ENCODE measurements at regions of chr10 and their contacts with region 1.

Region 1: GRCh38 chr10:80498833-80499741 is 38.6 kb upstream of the SH2D4B start:
- DNase-seq: peak; percentile 89
- ATAC-seq: peak; percentile 78
- H3K4me3 Mint-ChIP-seq: peak overlapping the region; percentile 56
- H3K27ac Mint-ChIP-seq: peak overlapping the region; percentile 90
- H3K4me1 Mint-ChIP-seq: peaks cover 96% of the 10 kb centered on the region
- H3K27me3 Mint-ChIP-seq: no peaks in the 10 kb centered on the region
- CTCF ChIP-seq: no peak

Region 2: GRCh38 chr10:80144067-80144695 is 354.9 kb before region 1 on chr10:
- CTCF ChIA-PET with region 1: no interaction called
- POLR2A ChIA-PET with region 1: no interaction called
- intact Hi-C with region 1: no loop called
- DNase-seq: peak; percentile 39
- ATAC-seq: peak; percentile 64
- H3K4me3 Mint-ChIP-seq: peak overlapping the region; percentile 63
- H3K27ac Mint-ChIP-seq: no peak overlapping the region
- H3K4me1 Mint-ChIP-seq: peaks cover 18% of the 10 kb centered on the region
- H3K27me3 Mint-ChIP-seq: no peaks in the 10 kb centered on the region
- CTCF ChIP-seq: peak; percentile 61

Region 3: GRCh38 chr10:80453701-80454513 is 45.2 kb before region 1 on chr10 and contains the start of gene TSPAN14:
- CTCF ChIA-PET with region 1: interaction called, 1,114 read pairs
- POLR2A ChIA-PET with region 1: interaction called, 9 read pairs
- intact Hi-C with region 1: loop called (anchors 2 kb)
- DNase-seq: peak; percentile 77
- ATAC-seq: peak; percentile 76
- H3K4me3 Mint-ChIP-seq: peak within 1 kb of the TSS; percentile 86
- H3K27ac Mint-ChIP-seq: peak within 1 kb of the TSS; percentile 95
- H3K4me1 Mint-ChIP-seq: peaks cover 39% of the 10 kb centered on the region
- H3K27me3 Mint-ChIP-seq: no peaks in the 10 kb centered on the region
- CTCF ChIP-seq: no peak
- total RNA-seq, gene TSPAN14: 43.9 to 45.5 TPM

Region 4: DNA sequence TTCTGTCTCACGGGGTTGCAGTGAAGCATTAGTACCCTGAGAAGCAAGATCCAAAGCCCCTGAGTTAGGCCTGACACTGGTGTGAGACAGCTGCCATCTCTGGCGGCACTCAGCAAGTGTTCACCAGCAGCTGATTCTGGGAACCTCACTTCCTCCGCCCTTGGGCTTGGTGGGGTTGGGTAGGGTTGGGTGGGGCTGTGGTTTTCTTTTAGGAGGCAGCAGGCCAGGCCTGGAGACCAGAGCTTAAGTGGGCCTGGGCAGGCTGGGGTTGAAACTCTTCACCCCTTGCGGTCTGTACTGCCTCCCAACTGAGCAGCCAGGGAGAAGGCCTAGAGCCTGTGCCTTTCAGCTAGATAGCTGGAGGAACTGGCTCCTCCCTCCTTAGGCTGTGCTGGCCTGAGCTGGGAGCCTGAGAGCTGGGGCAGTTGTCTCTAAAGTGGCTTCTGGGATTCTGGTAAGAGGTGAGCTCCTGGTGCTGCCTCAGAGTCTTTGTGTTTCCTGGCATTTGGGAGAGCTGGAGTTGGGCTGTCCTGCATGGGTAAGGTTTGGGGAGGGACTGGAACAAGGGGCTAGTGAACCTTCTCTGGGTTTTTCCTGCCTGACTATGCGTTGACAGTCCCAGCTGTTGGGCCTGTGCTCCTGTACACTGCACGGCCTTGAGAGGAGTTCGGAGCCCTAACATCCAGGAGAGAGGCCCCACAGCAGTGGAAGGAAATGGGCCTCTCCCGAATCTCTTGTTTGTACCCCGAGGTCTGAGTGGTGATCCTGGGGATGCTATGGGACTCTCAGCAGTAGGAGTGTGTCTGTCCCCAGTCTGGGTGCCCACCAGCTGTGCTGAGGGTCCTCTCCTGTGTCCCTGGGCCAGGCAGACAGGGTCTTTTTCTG is 39.8 kb before region 1 on chr10:
- CTCF ChIA-PET with region 1: interaction called, 1,114 read pairs
- POLR2A ChIA-PET with region 1: interaction called, 223 read pairs
- intact Hi-C with region 1: no loop called
- DNase-seq: peak; percentile 90
- ATAC-seq: peak; percentile 60
- H3K4me3 Mint-ChIP-seq: peak overlapping the region; percentile 86
- H3K27ac Mint-ChIP-seq: peak overlapping the region; percentile 95
- H3K4me1 Mint-ChIP-seq: peaks cover 78% of the 10 kb centered on the region
- H3K27me3 Mint-ChIP-seq: no peaks in the 10 kb centered on the region
- CTCF ChIP-seq: no peak

Region 5: GRCh38 chr10:80464557-80465450 is 34.3 kb before region 1 on chr10:
- CTCF ChIA-PET with region 1: interaction called, 1,114 read pairs
- POLR2A ChIA-PET with region 1: interaction called, 223 read pairs
- intact Hi-C with region 1: no loop called
- DNase-seq: peak; percentile 60
- ATAC-seq: no peak
- H3K4me3 Mint-ChIP-seq: peak overlapping the region; percentile 71
- H3K27ac Mint-ChIP-seq: peak overlapping the region; percentile 97
- H3K4me1 Mint-ChIP-seq: peaks cover 94% of the 10 kb centered on the region
- H3K27me3 Mint-ChIP-seq: no peaks in the 10 kb centered on the region
- CTCF ChIP-seq: no peak

Region 6: GRCh38 chr10:80472234-80473095 is 26.6 kb before region 1 on chr10:
- CTCF ChIA-PET with region 1: interaction called, 1,114 read pairs
- POLR2A ChIA-PET with region 1: interaction called, 223 read pairs
- intact Hi-C with region 1: no loop called
- DNase-seq: peak; percentile 72
- ATAC-seq: peak; percentile 70
- H3K4me3 Mint-ChIP-seq: peak overlapping the region; percentile 39
- H3K27ac Mint-ChIP-seq: peak overlapping the region; percentile 88
- H3K4me1 Mint-ChIP-seq: peaks cover 85% of the 10 kb centered on the region
- H3K27me3 Mint-ChIP-seq: no peaks in the 10 kb centered on the region
- CTCF ChIP-seq: no peak

Region 7: GRCh38 chr10:80487791-80488538 is 11.1 kb before region 1 on chr10:
- CTCF ChIA-PET with region 1: interaction called, 154 read pairs
- POLR2A ChIA-PET with region 1: interaction called, 113 read pairs
- intact Hi-C with region 1: no loop called
- DNase-seq: peak; percentile 79
- ATAC-seq: peak; percentile 50
- H3K4me3 Mint-ChIP-seq: peak overlapping the region; percentile 40
- H3K27ac Mint-ChIP-seq: peak overlapping the region; percentile 91
- H3K4me1 Mint-ChIP-seq: peaks cover 93% of the 10 kb centered on the region
- H3K27me3 Mint-ChIP-seq: no peaks in the 10 kb centered on the region
- CTCF ChIP-seq: no peak

Region 8: GRCh38 chr10:80509403-80510161 is 10.5 kb after region 1 on chr10:
- CTCF ChIA-PET with region 1: interaction called, 154 read pairs
- POLR2A ChIA-PET with region 1: interaction called, 10 read pairs
- intact Hi-C with region 1: no loop called
- DNase-seq: no peak
- ATAC-seq: no peak
- H3K4me3 Mint-ChIP-seq: no peak overlapping the region
- H3K27ac Mint-ChIP-seq: peak overlapping the region; percentile 53
- H3K4me1 Mint-ChIP-seq: peaks cover 30% of the 10 kb centered on the region
- H3K27me3 Mint-ChIP-seq: no peaks in the 10 kb centered on the region
- CTCF ChIP-seq: no peak

Region 9: DNA sequence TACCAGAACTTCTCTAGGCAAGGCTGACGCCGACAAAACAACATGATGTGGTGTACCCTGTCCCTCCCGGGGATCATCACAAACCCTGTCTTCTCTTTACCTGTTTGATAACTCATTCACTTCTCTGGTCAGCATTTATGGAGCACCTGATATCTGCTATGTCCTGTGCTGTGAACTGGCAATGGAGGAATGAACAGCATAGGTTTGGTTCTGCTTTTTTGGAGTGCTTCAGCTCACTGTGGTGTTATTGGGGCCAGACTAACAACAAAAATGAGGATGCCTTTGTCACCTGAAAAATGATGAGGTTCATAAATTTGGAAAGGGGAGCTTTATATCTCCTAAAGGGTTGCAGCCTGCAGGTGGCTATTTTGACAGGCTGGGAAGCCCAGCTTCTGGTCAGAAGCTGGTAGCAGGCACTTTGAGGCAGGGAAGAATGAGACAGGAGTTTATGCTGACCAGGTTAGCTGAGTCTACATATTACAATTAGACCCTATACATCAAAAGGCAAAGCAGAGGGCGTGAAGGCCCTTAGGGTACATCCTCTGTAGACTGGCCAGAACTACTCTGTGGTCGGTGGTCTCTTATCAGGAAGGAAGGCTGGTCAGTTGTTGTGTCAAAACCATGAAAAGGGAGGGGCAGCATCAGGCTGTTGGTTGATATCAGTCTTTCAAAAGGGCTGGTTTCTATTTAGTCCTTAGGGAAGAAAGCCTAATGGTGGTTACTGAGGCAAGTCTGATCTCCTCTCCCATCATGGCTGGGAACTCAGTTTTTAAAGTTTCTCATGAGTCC is 81.0 kb after region 1 on chr10:
- CTCF ChIA-PET with region 1: no interaction called
- POLR2A ChIA-PET with region 1: no interaction called
- intact Hi-C with region 1: no loop called
- DNase-seq: no peak
- ATAC-seq: no peak
- H3K4me3 Mint-ChIP-seq: no peak overlapping the region
- H3K27ac Mint-ChIP-seq: no peak overlapping the region
- H3K4me1 Mint-ChIP-seq: no peaks in the 10 kb centered on the region
- H3K27me3 Mint-ChIP-seq: no peaks in the 10 kb centered on the region
- CTCF ChIP-seq: no peak

Measured in activated CD8-positive, alpha-beta T cell treated with anti-CD3 and anti-CD28 coated beads for 36 hours (primary cell).